ENCODE measurements at regions of chr5 and their contacts with region 1.

Region 1: DNA sequence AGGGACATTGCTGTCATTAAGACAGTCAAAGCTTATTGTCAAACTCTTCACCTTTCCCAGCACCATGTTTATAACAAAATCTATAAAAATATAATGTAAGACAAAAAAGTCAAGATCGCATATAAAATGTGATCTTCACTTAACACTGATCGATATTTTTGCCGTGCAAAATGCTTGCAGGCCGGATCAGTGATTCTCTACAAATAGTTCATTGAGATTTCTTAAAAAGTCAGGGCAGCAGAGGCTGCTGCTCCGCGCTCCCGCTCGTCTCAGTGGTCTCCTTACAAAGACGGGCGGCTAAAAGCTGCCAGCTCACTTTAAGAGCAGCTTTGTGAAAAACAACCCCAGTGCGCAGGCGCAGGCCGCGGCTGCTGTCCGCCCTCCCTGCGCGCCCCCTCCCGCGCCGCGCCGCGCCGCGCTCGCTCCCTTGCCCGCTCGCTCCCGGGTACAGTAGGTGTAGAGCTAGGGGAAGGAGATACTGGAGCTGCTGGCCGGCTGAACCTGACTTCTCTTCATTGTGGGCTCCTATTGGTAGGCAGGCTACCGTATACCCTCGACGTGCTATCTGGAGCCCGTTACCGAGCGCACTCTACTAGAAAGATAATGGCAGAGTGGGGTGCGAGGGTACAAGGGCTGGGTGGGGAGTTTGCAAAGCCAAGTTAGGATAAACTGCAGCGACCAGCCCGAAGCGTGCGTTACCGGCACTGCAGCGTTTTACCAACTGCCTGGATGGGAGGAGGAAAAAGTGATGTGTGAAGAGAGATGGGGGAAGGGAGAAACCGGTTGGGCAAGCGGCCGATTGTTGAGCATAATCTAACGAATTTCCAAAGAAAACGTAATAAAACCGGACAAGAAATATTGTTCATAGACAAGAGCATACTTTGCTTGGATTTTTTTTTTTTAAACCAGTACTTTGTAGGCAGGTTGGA is at the start of gene ARRDC3:
- DNase-seq: peak; percentile 92 to 97 (median 96)
- H3K4me3 ChIP-seq: peak within 1 kb of the TSS; percentile 94
- H3K4me3 Mint-ChIP-seq: peak within 1 kb of the TSS; percentile 94 to 100 (median 96)
- H3K27ac ChIP-seq: peak within 1 kb of the TSS; percentile 100
- H3K27ac Mint-ChIP-seq: peak within 1 kb of the TSS; percentile 95 to 100 (median 98)
- H3K4me1 ChIP-seq: peaks cover 18% of the 10 kb centered on the region
- H3K4me1 Mint-ChIP-seq: peaks cover 27 to 31% (median 29%) of the 10 kb centered on the region in 3 donors
- H3K27me3 ChIP-seq: no peaks in the 10 kb centered on the region
- H3K27me3 Mint-ChIP-seq: peaks cover 0 to 2% of the 10 kb centered on the region in 2 donors
- total RNA-seq, gene ARRDC3: 30.3 to 32.4 TPM

Region 2: DNA sequence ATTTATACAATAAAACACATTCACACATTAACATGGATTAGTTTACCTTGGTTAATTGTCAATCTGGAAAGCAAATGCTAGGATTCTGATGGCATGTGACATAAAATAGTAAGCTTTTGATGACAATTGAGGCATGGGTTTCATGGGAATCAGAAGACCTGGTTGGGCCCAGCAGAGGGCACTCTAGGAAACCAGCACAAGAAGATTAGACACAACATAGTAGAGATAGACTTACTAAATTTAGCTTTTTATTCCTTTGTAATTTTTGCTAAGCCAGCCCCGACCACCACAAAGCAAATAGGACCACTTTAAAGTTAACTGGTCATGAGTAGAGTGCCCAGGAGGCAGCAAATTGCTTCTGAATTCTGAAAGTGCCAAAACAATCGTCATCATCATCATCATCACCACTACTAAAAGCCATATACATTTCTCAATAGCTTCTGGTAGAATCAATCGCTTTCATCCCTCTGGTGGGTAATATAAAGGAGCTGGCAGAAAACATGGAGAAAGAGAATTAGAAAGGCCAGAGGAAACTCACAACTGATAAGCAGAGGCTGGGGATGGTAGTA is 163.4 kb before region 1 on chr5:
- CTCF ChIA-PET with region 1: interaction called, 137 read pairs
- POLR2A ChIA-PET with region 1: interaction called, 6 read pairs
- DNase-seq: peak in 1 of 5 donors; percentile 11
- H3K4me3 ChIP-seq: no peak overlapping the region
- H3K4me3 Mint-ChIP-seq: no peak overlapping the region
- H3K27ac ChIP-seq: peak overlapping the region; percentile 26
- H3K27ac Mint-ChIP-seq: no peak overlapping the region
- H3K4me1 ChIP-seq: no peaks in the 10 kb centered on the region
- H3K4me1 Mint-ChIP-seq: no peaks in the 10 kb centered on the region
- H3K27me3 ChIP-seq: no peaks in the 10 kb centered on the region
- H3K27me3 Mint-ChIP-seq: peaks cover 0 to 21% of the 10 kb centered on the region in 2 donors

Region 3: DNA sequence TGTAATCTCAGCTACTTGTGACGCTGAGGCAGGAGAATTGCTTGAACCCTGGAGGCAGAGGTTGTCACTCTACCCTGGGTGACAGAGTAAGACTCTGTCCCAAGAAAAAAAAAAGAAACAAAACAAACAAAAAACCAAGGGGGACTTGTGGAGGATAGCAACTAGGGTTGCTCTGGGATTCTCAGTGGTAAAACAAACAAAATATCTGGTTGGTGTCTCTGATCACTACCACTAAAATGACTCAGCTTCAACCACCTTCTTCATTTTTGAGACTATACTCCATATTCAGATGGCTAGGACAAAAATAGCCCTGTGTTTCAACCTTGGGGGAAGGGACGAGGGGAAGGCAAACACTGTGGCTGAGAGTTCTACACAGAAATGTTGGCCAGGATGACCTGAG is 110.4 kb before region 1 on chr5:
- CTCF ChIA-PET with region 1: interaction called, 12 read pairs
- POLR2A ChIA-PET with region 1: interaction called, 7 read pairs
- DNase-seq: no peak
- H3K4me3 ChIP-seq: no peak overlapping the region
- H3K4me3 Mint-ChIP-seq: no peak overlapping the region
- H3K27ac ChIP-seq: no peak overlapping the region
- H3K27ac Mint-ChIP-seq: no peak overlapping the region
- H3K4me1 ChIP-seq: peaks cover 10% of the 10 kb centered on the region
- H3K4me1 Mint-ChIP-seq: peaks cover 7 to 19% (median 11%) of the 10 kb centered on the region in 3 donors
- H3K27me3 ChIP-seq: no peaks in the 10 kb centered on the region
- H3K27me3 Mint-ChIP-seq: peaks cover 0 to 7% of the 10 kb centered on the region in 2 donors

Region 4: GRCh38 chr5:91311697-91312501 is 71.4 kb before region 1 on chr5:
- CTCF ChIA-PET with region 1: interaction called, 46 read pairs
- POLR2A ChIA-PET with region 1: interaction called, 45 read pairs
- DNase-seq: peak; percentile 38 to 83 (median 68)
- H3K4me3 ChIP-seq: peak overlapping the region; percentile 1
- H3K4me3 Mint-ChIP-seq: peak overlapping the region; percentile 33 to 85 (median 67)
- H3K27ac ChIP-seq: peak overlapping the region; percentile 57
- H3K27ac Mint-ChIP-seq: peak overlapping the region; percentile 89 to 97 (median 96)
- H3K4me1 ChIP-seq: peaks cover 41% of the 10 kb centered on the region
- H3K4me1 Mint-ChIP-seq: peaks cover 39 to 52% (median 47%) of the 10 kb centered on the region in 3 donors
- H3K27me3 ChIP-seq: no peaks in the 10 kb centered on the region
- H3K27me3 Mint-ChIP-seq: peaks cover 0 to 2% of the 10 kb centered on the region in 2 donors

Region 5: GRCh38 chr5:91419571-91420537 is 36.6 kb after region 1 on chr5:
- CTCF ChIA-PET with region 1: interaction called, 29 read pairs
- POLR2A ChIA-PET with region 1: interaction called, 4 read pairs
- DNase-seq: peak; percentile 53 to 77 (median 63)
- H3K4me3 ChIP-seq: no peak overlapping the region
- H3K4me3 Mint-ChIP-seq: no peak overlapping the region
- H3K27ac ChIP-seq: no peak overlapping the region
- H3K27ac Mint-ChIP-seq: peak overlapping the region in 1 of 8 donors; percentile 7
- H3K4me1 ChIP-seq: no peaks in the 10 kb centered on the region
- H3K4me1 Mint-ChIP-seq: peaks cover 8 to 20% (median 15%) of the 10 kb centered on the region in 3 donors
- H3K27me3 ChIP-seq: no peaks in the 10 kb centered on the region
- H3K27me3 Mint-ChIP-seq: peaks cover 0 to 1% of the 10 kb centered on the region in 2 donors